ENCODE measurements at regions of chr17 and their contacts with region 1.

Region 1: DNA sequence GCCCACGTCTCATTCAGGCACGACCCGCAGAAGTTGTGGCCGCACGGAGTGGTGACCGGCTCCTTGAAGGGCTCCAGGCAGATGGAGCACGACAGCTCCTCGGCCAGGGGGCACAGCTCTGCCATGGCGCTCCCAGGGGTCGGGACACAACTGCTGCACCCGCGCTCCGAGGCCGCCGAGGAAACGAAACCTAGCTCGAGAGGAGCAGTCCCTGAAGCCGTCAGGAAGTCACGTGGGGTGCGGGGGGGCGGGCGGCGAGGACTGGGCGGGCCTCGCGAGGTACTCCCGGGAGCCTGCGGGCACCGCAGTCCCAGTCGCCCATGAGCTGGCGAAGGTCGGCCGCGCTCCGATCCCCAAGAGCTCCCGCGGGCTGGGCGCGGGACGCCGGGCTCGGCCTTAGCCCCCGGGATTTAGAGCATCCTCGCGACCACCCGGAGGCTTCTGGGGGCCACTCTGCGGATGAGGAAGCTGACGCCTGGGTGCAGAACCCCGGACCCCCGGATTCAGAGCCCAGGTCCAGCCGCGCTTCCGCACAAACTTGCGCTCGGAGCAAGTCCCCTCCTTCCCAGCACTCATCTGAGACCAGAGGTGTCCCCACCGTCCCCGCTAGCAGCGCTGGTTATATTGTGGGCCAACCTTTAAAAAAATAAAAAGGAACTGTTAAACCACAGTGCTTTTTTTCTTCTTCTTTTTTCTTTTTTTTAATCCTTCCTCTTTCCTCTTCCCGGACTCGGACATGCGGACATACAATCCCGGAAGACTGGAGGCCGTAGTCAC is at the start of gene TRIM25:
- DNase-seq: peak; percentile 86
- ATAC-seq: peak; percentile 91
- H3K4me3 ChIP-seq: peak within 1 kb of the TSS; percentile 96 to 98 (median 98)
- H3K27ac ChIP-seq: peak within 1 kb of the TSS; percentile 85
- H3K4me1 ChIP-seq: peaks cover 49% of the 10 kb centered on the region
- H3K27me3 ChIP-seq: no peaks in the 10 kb centered on the region; a peak in 1 of 5 replicates
- CTCF ChIP-seq: no peak
- EP300 ChIP-seq: peak; percentile 13 to 28; a peak in 1 of 4 replicates
- POLR2A ChIP-seq: peak; percentile 99 to 100
- RAD21 ChIP-seq: 0 out of 2 replicates have a peak, but pooled peaks have one; percentile 48
- total RNA-seq, gene TRIM25: 38.3 and 42.2 TPM in 2 replicates

Region 2: DNA sequence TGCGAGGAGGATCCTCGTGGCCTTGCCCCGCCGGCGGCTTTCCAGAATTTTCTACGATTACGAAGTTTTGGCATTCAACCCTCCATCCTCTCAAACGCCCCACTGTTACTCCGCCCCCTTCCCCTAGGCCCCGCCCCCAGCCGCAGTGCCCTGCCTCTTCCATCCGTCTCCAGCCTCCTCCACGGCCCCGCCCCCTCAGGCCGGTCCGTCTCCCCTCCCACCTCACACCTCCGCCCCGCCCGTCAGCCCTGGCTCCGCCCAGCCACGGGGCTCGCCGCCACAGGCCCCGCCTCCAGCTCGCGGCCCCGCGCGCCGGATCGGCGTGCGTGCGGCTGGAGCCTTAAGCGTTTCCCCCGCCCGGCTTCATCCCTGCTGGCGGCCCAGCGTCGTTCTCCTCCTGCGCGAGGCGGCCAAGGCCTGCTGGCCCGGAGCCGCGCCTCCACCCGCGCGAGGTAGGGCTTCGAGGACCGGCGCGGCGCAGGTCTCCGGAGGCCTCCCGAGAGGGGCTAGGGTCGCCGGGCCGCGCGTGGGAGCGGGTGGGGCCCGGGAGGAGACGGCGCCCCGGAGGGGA is 80.2 kb before region 1 on chr17 and contains the starts of genes C17orf67 and DGKE:
- CTCF ChIA-PET with region 1: no interaction called
- POLR2A ChIA-PET with region 1: interaction called, 25 read pairs
- in situ Hi-C with region 1: no loop called
- intact Hi-C with region 1: loop called (anchors 1 kb)
- DNase-seq: peak; percentile 86
- ATAC-seq: peak; percentile 85
- H3K4me3 ChIP-seq: peak within 1 kb of the TSS; percentile 69 to 86 (median 75)
- H3K27ac ChIP-seq: peak within 1 kb of the TSS; percentile 50
- H3K4me1 ChIP-seq: peaks cover 54% of the 10 kb centered on the region
- H3K27me3 ChIP-seq: no peaks in the 10 kb centered on the region; a peak in 1 of 5 replicates
- CTCF ChIP-seq: no peak; the same call in 1 of the 2 replicates
- EP300 ChIP-seq: no peak
- POLR2A ChIP-seq: peak; percentile 27 to 66; a peak in 3 of 4 replicates
- RAD21 ChIP-seq: no peak
- total RNA-seq, gene C17orf67: 0.62 and 0.86 TPM in 2 replicates
- total RNA-seq, gene DGKE: 3.2 and 5.3 TPM in 2 replicates

Region 3: GRCh38 chr17:56891784-56892183 is 22.3 kb before region 1 on chr17:
- CTCF ChIA-PET with region 1: no interaction called
- POLR2A ChIA-PET with region 1: interaction called, 15 read pairs
- in situ Hi-C with region 1: no loop called
- intact Hi-C with region 1: no loop called
- DNase-seq: no peak
- ATAC-seq: peak; percentile 50
- H3K4me3 ChIP-seq: no peak overlapping the region
- H3K27ac ChIP-seq: no peak overlapping the region
- H3K4me1 ChIP-seq: peaks cover 21% of the 10 kb centered on the region
- H3K27me3 ChIP-seq: no peaks in the 10 kb centered on the region
- CTCF ChIP-seq: peak; percentile 60
- EP300 ChIP-seq: no peak
- POLR2A ChIP-seq: no peak
- RAD21 ChIP-seq: no peak

Region 4: GRCh38 chr17:56926701-56927590 is 12.9 kb after region 1 on chr17:
- CTCF ChIA-PET with region 1: no interaction called
- POLR2A ChIA-PET with region 1: interaction called, 21 read pairs
- in situ Hi-C with region 1: no loop called
- intact Hi-C with region 1: no loop called
- DNase-seq: no peak
- ATAC-seq: no peak
- H3K4me3 ChIP-seq: no peak overlapping the region
- H3K27ac ChIP-seq: no peak overlapping the region
- H3K4me1 ChIP-seq: no peaks in the 10 kb centered on the region
- H3K27me3 ChIP-seq: no peaks in the 10 kb centered on the region
- CTCF ChIP-seq: no peak
- EP300 ChIP-seq: no peak
- POLR2A ChIP-seq: no peak
- RAD21 ChIP-seq: no peak

Region 5: DNA sequence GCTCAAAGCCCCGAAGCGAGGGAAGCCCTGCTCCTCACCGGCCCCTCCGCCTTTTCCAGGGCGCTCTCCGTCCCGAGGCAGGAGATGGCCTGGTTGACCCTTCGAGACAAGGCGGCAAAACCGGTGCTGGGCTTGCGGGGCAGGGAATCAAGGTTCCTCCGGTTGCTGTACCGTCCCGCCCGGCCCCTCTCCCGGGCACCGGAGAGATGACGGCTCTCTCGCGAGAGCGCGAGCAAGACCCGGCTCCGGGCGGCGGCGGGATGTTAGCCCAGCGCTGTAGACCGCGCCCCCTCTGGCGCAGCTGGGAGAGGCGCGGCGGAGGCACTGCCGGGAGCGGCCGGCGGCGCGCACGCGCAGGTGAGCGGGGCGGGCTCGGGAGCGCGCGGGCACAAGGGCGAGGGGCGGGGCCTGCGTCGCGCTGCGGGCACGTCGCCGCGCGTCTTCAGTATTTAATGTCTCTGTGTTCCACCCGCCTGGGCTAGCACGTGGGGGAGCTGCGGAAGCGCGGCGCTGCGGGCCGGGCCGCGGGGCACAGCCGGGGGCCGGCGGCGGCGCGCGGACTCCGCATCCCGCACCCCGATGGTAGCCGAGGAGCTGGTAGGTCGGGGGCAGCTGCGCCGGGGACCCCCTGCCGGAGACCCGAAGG is 170.9 kb after region 1 on chr17 and contains the start of gene AKAP1:
- CTCF ChIA-PET with region 1: no interaction called
- POLR2A ChIA-PET with region 1: interaction called, 10 read pairs
- in situ Hi-C with region 1: no loop called
- intact Hi-C with region 1: no loop called
- DNase-seq: peak; percentile 92
- ATAC-seq: peak; percentile 72
- H3K4me3 ChIP-seq: peak within 1 kb of the TSS; percentile 84 to 100 (median 94)
- H3K27ac ChIP-seq: peak within 1 kb of the TSS; percentile 92
- H3K4me1 ChIP-seq: peaks cover 62% of the 10 kb centered on the region
- H3K27me3 ChIP-seq: no peaks in the 10 kb centered on the region; a peak in 1 of 5 replicates
- CTCF ChIP-seq: peak; percentile 80
- EP300 ChIP-seq: peak in 1 of 2 experiments; percentile 35; a peak in 2 of 4 replicates
- POLR2A ChIP-seq: peak; percentile 87 to 95
- RAD21 ChIP-seq: peak; percentile 50; the same call in 1 of the 2 replicates
- total RNA-seq, gene AKAP1: 46.4 and 101 TPM in 2 replicates

Measured in HepG2 (cell line).